ENCODE measurements at regions of chr6 and their contacts with region 1.

Region 1: DNA sequence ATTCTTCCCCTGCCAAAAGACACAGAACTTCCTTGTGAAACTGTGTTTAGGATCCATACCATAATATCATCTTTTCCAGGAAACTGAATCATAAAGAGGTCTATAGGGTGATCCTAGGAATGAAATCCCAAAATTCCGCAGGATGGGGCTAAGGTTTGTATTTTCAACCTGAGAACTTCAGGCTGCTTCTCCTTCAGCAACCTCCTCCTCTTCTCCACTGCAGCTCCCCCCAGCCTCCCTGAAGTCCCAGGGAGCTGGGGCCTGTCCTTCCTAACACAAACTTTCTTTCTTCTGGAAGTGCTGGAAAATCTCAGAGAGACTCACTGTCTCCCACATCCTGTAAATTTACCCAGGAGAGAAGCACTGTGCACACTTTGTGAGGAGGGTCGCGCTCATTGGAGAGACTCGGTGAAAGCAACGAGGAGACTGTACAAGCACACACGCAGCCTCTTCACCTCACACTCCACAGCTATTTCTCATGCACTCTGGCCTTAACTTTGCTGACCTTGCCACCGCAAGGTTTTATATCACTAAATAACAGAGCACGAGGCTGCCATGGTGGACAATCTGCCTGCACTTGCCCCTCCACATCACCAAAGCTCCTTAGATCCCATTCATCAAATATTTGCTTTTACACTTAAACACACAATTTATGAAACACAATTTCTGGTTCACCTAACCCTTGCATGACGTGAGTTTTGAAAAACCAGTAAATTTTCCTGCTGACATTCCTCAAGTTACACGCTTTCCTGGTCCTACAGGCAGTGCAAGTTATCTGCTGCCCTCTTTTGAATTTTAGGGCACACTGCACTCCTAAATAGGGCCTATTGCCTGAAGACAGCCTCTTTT is 14.3 kb downstream of the ID4 start:
- DNase-seq: peak; percentile 46
- H3K4me3 ChIP-seq: no peak overlapping the region
- H3K27ac ChIP-seq: no peak overlapping the region
- H3K4me1 ChIP-seq: no peaks in the 10 kb centered on the region
- H3K27me3 ChIP-seq: no peaks in the 10 kb centered on the region
- CTCF ChIP-seq: peak; percentile 88 to 89

Region 2: GRCh38 chr6:18595774-18596530 is 1255.5 kb before region 1 on chr6:
- CTCF ChIA-PET with region 1: no interaction called
- dilution Hi-C with region 1: no loop called
- in situ Hi-C with region 1: no loop called
- intact Hi-C with region 1: loop called (anchors 1 kb)
- DNase-seq: peak; percentile 36
- H3K4me3 ChIP-seq: no peak overlapping the region
- H3K27ac ChIP-seq: no peak overlapping the region
- H3K4me1 ChIP-seq: no peaks in the 10 kb centered on the region
- H3K27me3 ChIP-seq: no peaks in the 10 kb centered on the region
- CTCF ChIP-seq: peak; percentile 94 to 97

Region 3: GRCh38 chr6:18997375-18997826 is 854.1 kb before region 1 on chr6:
- CTCF ChIA-PET with region 1: no interaction called
- dilution Hi-C with region 1: no loop called
- in situ Hi-C with region 1: loop called (anchors 25 kb)
- intact Hi-C with region 1: loop called (anchors 1 kb)
- DNase-seq: peak; percentile 40
- H3K4me3 ChIP-seq: no peak overlapping the region
- H3K27ac ChIP-seq: no peak overlapping the region
- H3K4me1 ChIP-seq: no peaks in the 10 kb centered on the region
- H3K27me3 ChIP-seq: no peaks in the 10 kb centered on the region
- CTCF ChIP-seq: peak; percentile 64 to 80

Region 4: GRCh38 chr6:19204443-19204842 is 647.0 kb before region 1 on chr6:
- CTCF ChIA-PET with region 1: no interaction called
- dilution Hi-C with region 1: no loop called
- in situ Hi-C with region 1: no loop called
- intact Hi-C with region 1: loop called (anchors 2 kb)
- DNase-seq: no peak
- H3K4me3 ChIP-seq: no peak overlapping the region
- H3K27ac ChIP-seq: no peak overlapping the region
- H3K4me1 ChIP-seq: no peaks in the 10 kb centered on the region
- H3K27me3 ChIP-seq: no peaks in the 10 kb centered on the region
- CTCF ChIP-seq: peak in 1 of 2 donors; percentile 47

Region 5: GRCh38 chr6:19368509-19368908 is 483.0 kb before region 1 on chr6:
- CTCF ChIA-PET with region 1: no interaction called
- dilution Hi-C with region 1: no loop called
- in situ Hi-C with region 1: no loop called
- intact Hi-C with region 1: loop called (anchors 2 kb)
- DNase-seq: peak; percentile 67
- H3K4me3 ChIP-seq: no peak overlapping the region
- H3K27ac ChIP-seq: no peak overlapping the region
- H3K4me1 ChIP-seq: no peaks in the 10 kb centered on the region
- H3K27me3 ChIP-seq: no peaks in the 10 kb centered on the region
- CTCF ChIP-seq: peak in 1 of 2 donors; percentile 48

Region 6: GRCh38 chr6:19873031-19873430 is 21.6 kb after region 1 on chr6:
- CTCF ChIA-PET with region 1: no interaction called
- dilution Hi-C with region 1: no loop called
- in situ Hi-C with region 1: no loop called
- intact Hi-C with region 1: no loop called
- DNase-seq: no peak
- H3K4me3 ChIP-seq: no peak overlapping the region
- H3K27ac ChIP-seq: no peak overlapping the region
- H3K4me1 ChIP-seq: peaks cover under 1% of the 10 kb centered on the region
- H3K27me3 ChIP-seq: no peaks in the 10 kb centered on the region
- CTCF ChIP-seq: peak in 1 of 2 donors; percentile 18

Region 7: DNA sequence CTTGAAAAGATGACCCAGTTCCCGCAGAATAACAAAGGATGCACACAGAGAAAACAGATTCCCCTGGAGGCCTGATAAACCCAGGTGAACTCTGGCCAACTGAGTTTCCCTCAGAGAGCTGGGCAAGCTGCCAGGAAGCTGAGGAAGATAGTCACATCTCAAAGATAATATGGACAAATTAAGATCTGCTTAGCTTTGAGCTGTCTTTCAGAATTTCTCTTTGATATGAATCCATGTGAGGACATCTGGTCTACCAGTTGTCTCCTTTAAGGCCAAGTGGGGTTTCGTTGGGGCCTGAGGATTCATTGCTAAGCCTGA is 45.2 kb after region 1 on chr6:
- CTCF ChIA-PET with region 1: no interaction called
- dilution Hi-C with region 1: no loop called
- in situ Hi-C with region 1: no loop called
- intact Hi-C with region 1: no loop called
- DNase-seq: peak; percentile 37
- H3K4me3 ChIP-seq: no peak overlapping the region
- H3K27ac ChIP-seq: peak overlapping the region; percentile 32
- H3K4me1 ChIP-seq: peaks cover 33% of the 10 kb centered on the region
- H3K27me3 ChIP-seq: no peaks in the 10 kb centered on the region
- CTCF ChIP-seq: no peak

Region 8: GRCh38 chr6:20056350-20056992 is 205.0 kb after region 1 on chr6:
- CTCF ChIA-PET with region 1: no interaction called
- dilution Hi-C with region 1: no loop called
- in situ Hi-C with region 1: no loop called
- intact Hi-C with region 1: loop called (anchors 5 kb)
- DNase-seq: peak; percentile 19
- H3K4me3 ChIP-seq: no peak overlapping the region
- H3K27ac ChIP-seq: no peak overlapping the region
- H3K4me1 ChIP-seq: no peaks in the 10 kb centered on the region
- H3K27me3 ChIP-seq: no peaks in the 10 kb centered on the region
- CTCF ChIP-seq: peak; percentile 64 to 67